ENCODE measurements at regions of chr17 and their contacts with region 1.

Region 1: DNA sequence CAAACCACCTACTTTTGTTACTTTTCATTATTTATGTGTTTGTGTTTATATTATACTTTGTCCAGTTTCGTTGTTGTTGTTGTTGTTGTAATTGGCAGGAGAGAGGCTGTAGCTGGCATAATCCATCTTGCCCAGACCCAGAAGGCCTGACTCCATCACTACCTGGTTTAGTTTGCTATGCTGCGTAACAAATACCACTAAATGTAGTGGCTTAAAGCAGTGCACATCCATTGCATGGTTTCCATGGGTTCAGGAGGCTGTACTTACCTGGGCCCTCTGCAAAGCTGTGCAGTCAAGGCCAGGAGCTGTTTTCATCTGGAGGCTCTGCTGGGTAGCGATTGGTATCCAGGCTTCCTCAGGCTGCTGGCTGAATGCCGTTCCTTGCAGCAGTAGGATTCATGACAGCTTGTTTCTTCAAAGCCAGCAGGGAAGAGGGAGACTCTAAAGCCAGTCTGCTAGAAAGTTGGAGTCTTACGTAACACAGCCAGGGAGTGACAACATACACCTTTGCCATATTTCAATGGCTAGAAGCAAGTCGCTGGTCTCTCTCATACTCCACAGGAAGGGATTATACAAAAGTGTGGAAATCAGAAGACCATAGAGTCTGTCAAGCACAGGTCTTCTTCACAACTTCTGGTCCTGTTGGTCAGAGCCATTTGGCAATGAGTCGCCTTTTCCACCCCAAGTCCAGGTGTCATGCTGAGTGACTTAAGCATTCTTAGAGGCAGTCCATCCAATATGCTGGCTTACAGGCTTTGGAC is 41.1 kb downstream of the TNRC6C start:
- DNase-seq: no peak
- ATAC-seq: no peak
- H3K4me3 ChIP-seq: no peak overlapping the region
- H3K27ac ChIP-seq: no peak overlapping the region
- H3K4me1 ChIP-seq: peaks cover 4 to 7% (median 4%) of the 10 kb centered on the region in 3 donors
- H3K27me3 ChIP-seq: no peaks in the 10 kb centered on the region
- CTCF ChIP-seq: no peak

Region 2: GRCh38 chr17:77924757-77925336 is 74.7 kb before region 1 on chr17:
- intact Hi-C with region 1: loop called in 1 of 3 experiments (anchors 10 kb)
- DNase-seq: peak in 3 of 6 donors; percentile 52 to 58 (median 56)
- ATAC-seq: peak; percentile 66 to 83 (median 70)
- H3K4me3 ChIP-seq: no peak overlapping the region
- H3K27ac ChIP-seq: peak overlapping the region in 1 of 4 donors; percentile 1
- H3K4me1 ChIP-seq: no peaks in the 10 kb centered on the region
- H3K27me3 ChIP-seq: peaks cover 0 to 4% (median 0%) of the 10 kb centered on the region in 4 donors
- CTCF ChIP-seq: no peak

Measured in pancreas (tissue), 10 donors.